PC-9 (cell line): ENCODE measurements at regions of chr10 and their contacts with region 1.

Region 1: DNA sequence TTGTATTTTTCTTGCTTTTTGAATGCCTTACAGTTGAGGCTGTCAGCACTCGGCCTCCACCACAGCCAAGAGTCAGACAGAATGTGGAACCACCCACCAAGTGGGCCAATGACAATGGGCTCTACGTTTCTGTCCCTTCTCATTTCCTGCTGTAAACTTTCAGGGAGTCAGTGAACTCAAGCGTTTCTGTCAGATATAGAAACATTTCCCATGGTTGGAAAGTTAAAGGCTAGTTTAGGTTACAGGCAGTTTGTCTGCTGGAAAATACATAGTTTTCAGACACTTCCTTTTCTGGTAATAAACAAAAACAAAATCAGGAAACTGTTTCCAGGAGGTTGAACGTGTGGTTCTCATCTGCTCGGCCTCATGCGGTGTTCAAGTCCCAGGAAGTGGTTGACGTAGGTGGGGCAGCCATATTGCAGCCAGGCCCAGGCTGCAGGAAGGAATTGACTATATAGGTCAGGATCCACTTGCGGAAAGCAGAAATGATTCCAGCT is 245.1 kb downstream of the CAMK1D start:
- DNase-seq: no peak
- H3K4me3 ChIP-seq: no peak overlapping the region
- H3K27ac ChIP-seq: no peak overlapping the region
- H3K4me1 ChIP-seq: peaks cover 6% of the 10 kb centered on the region; the same call in 1 of the 2 replicates
- H3K27me3 ChIP-seq: no peaks in the 10 kb centered on the region
- CTCF ChIP-seq: no peak

Region 2: GRCh38 chr10:12564173-12564572 is 30.3 kb before region 1 on chr10:
- CTCF ChIA-PET with region 1: no interaction called
- POLR2A ChIA-PET with region 1: interaction called, 16 read pairs
- intact Hi-C with region 1: no loop called
- DNase-seq: no peak
- H3K4me3 ChIP-seq: no peak overlapping the region
- H3K27ac ChIP-seq: no peak overlapping the region
- H3K4me1 ChIP-seq: no peaks in the 10 kb centered on the region
- H3K27me3 ChIP-seq: no peaks in the 10 kb centered on the region
- CTCF ChIP-seq: no peak

Region 3: DNA sequence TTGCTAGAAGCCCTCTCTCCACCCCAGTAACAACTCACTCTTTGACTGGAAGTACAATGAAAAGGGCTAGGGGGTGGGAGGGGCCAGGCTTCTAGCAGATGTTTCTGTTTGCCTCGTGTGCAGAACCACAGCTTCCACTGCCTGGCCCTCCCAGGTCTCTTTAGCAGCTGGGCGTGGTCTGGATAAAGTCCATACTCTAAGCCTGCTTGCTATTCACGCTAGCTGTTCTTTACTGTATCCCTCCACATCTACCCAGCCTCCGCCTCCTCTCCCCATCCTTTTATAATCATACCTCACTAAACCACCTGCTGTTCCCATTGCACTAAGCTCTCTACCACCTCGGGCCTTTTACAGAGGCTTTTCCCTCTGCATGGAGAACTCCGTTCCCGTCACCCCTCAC is 43.6 kb after region 1 on chr10:
- CTCF ChIA-PET with region 1: no interaction called
- POLR2A ChIA-PET with region 1: no interaction called
- intact Hi-C with region 1: no loop called
- DNase-seq: no peak
- H3K4me3 ChIP-seq: no peak overlapping the region
- H3K27ac ChIP-seq: no peak overlapping the region
- H3K4me1 ChIP-seq: peaks cover 12% of the 10 kb centered on the region; the same call in 1 of the 2 replicates
- H3K27me3 ChIP-seq: no peaks in the 10 kb centered on the region
- CTCF ChIP-seq: no peak